ENCODE measurements at regions of chr10 and their contacts with region 1.

Region 1: DNA sequence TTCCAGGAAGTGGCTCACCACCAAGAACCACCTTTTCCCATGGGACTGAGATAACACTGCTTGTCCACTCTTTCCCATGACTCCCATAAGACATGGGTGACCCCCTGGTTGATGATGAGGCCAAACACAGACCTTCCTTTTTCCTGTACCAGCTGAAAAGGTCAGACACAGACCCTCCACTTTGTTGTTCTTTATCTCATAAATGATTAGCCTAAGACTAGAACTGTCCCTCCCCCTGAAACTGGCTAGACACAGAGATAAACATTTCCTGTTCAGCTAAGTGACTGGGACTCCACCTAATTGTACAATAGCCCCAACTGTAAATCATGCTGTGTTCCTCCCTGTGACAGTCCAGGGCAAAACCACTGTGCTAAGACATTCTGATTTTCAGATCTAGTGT is 8.2 kb upstream of the NRG3 start:
- DNase-seq: peak; percentile 69
- H3K4me3 Mint-ChIP-seq: peak overlapping the region; percentile 49
- H3K27ac Mint-ChIP-seq: peak overlapping the region; percentile 95
- H3K4me1 Mint-ChIP-seq: peaks cover 66% of the 10 kb centered on the region
- H3K27me3 Mint-ChIP-seq: no peaks in the 10 kb centered on the region
- CTCF ChIP-seq: no peak

Region 2: GRCh38 chr10:81403451-81403850 is 463.3 kb before region 1 on chr10:
- CTCF ChIA-PET with region 1: interaction called, 3 read pairs
- intact Hi-C with region 1: loop called (anchors 1 kb)
- DNase-seq: peak; percentile 63
- H3K4me3 Mint-ChIP-seq: peak overlapping the region; percentile 29
- H3K27ac Mint-ChIP-seq: peak overlapping the region; percentile 74
- H3K4me1 Mint-ChIP-seq: peaks cover 42% of the 10 kb centered on the region
- H3K27me3 Mint-ChIP-seq: no peaks in the 10 kb centered on the region
- CTCF ChIP-seq: no peak

Region 3: GRCh38 chr10:81903472-81903871 is 36.7 kb after region 1 on chr10:
- CTCF ChIA-PET with region 1: no interaction called
- intact Hi-C with region 1: no loop called
- DNase-seq: no peak
- H3K4me3 Mint-ChIP-seq: no peak overlapping the region
- H3K27ac Mint-ChIP-seq: no peak overlapping the region
- H3K4me1 Mint-ChIP-seq: peaks cover 9% of the 10 kb centered on the region
- H3K27me3 Mint-ChIP-seq: no peaks in the 10 kb centered on the region
- CTCF ChIP-seq: no peak

Region 4: DNA sequence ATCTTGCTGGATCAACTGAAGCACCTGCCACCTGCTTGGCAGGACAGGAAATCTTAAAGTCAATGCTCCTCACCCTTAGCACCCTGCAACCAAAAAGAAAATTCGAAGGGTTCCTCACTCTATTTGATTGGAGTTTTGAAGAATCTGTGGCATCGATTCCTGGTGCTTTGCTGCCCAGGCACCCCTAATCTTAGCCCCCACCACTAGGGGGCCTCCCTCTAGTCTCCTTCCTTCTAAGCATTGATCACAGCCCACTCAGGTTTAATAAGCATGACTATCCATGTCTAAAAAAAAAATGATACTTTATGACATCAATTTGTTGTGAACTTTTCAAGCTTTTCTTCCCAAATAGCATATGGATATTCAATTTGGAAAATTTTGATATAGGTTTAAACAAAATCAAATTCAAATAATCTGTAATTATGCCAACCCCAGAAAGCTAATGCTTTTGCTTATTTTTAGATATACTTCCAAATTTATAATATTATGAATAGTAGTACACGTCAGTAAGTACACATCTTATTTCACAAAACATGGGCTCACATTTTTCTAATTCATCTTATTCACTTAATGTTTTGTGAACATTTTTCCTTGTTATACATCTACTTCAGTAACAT is 53.6 kb after region 1 on chr10:
- CTCF ChIA-PET with region 1: no interaction called
- intact Hi-C with region 1: loop called (anchors 2 kb)
- DNase-seq: peak; percentile 75
- H3K4me3 Mint-ChIP-seq: no peak overlapping the region
- H3K27ac Mint-ChIP-seq: no peak overlapping the region
- H3K4me1 Mint-ChIP-seq: peaks cover 40% of the 10 kb centered on the region
- H3K27me3 Mint-ChIP-seq: no peaks in the 10 kb centered on the region
- CTCF ChIP-seq: peak; percentile 87

Measured in Calu3 (cell line).